ENCODE measurements at regions of chr5 and their contacts with region 1.

Region 1: GRCh38 chr5:119302916-119303897 is 52.6 kb upstream of the TNFAIP8 start:
- DNase-seq: peak; percentile 65 to 93
- ATAC-seq: peak; percentile 94 to 96
- H3K4me3 ChIP-seq: peak overlapping the region; percentile 14
- H3K27ac ChIP-seq: peak overlapping the region; percentile 82 to 89
- H3K4me1 ChIP-seq: peaks cover 78% of the 10 kb centered on the region
- CTCF ChIP-seq: no peak
- EP300 ChIP-seq: peak; percentile 79 to 90; a peak in 4 of 5 replicates
- POLR2A ChIP-seq: no peak
- RAD21 ChIP-seq: peak; percentile 40 to 50

Region 2: DNA sequence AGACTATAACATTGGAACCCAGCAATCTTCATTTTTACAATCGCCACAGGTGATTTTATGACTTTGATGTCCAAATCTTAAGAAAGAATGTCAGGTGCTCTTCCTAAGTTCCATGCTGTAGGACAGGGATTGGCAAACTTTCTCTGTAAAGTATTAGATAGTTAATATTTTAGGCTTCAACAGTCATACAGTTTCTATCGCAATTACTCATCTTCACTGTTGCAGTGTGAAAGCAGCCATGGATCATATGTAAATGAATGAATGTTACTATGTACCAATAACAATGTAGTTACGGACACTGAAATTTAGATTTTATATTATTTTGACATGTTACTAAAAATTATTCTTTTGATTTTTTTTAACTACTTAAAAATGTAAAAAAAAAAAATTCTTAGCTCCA is 484.6 kb before region 1 on chr5:
- CTCF ChIA-PET with region 1: no interaction called
- POLR2A ChIA-PET with region 1: no interaction called
- DNase-seq: no peak
- ATAC-seq: no peak
- H3K4me3 ChIP-seq: no peak overlapping the region
- H3K27ac ChIP-seq: no peak overlapping the region
- H3K4me1 ChIP-seq: no peaks in the 10 kb centered on the region
- CTCF ChIP-seq: no peak
- EP300 ChIP-seq: no peak
- POLR2A ChIP-seq: no peak
- RAD21 ChIP-seq: no peak

Region 3: GRCh38 chr5:119168401-119168800 is 134.8 kb before region 1 on chr5:
- CTCF ChIA-PET with region 1: no interaction called
- POLR2A ChIA-PET with region 1: no interaction called
- DNase-seq: no peak
- ATAC-seq: no peak
- H3K4me3 ChIP-seq: no peak overlapping the region
- H3K27ac ChIP-seq: no peak overlapping the region
- H3K4me1 ChIP-seq: no peaks in the 10 kb centered on the region
- CTCF ChIP-seq: no peak
- EP300 ChIP-seq: no peak
- POLR2A ChIP-seq: no peak
- RAD21 ChIP-seq: no peak

Region 4: GRCh38 chr5:119267958-119268386 is 35.2 kb before region 1 on chr5:
- CTCF ChIA-PET with region 1: interaction called, 4 read pairs
- POLR2A ChIA-PET with region 1: interaction called, 17 read pairs
- DNase-seq: peak; percentile 46 to 84
- ATAC-seq: peak; percentile 77 to 79
- H3K4me3 ChIP-seq: peak overlapping the region; percentile 69
- H3K27ac ChIP-seq: peak overlapping the region; percentile 86 to 93
- H3K4me1 ChIP-seq: peaks cover 34% of the 10 kb centered on the region
- CTCF ChIP-seq: no peak
- EP300 ChIP-seq: no peak
- POLR2A ChIP-seq: no peak
- RAD21 ChIP-seq: no peak

Region 5: GRCh38 chr5:119322948-119323537 is 19.8 kb after region 1 on chr5:
- CTCF ChIA-PET with region 1: interaction called, 4 read pairs
- POLR2A ChIA-PET with region 1: interaction called, 14 read pairs
- DNase-seq: peak in 1 of 2 experiments; percentile 45
- ATAC-seq: peak in 1 of 2 experiments; percentile 11; a peak in 2 of 6 replicates
- H3K4me3 ChIP-seq: no peak overlapping the region
- H3K27ac ChIP-seq: peak overlapping the region; percentile 86 to 93
- H3K4me1 ChIP-seq: peaks cover 60% of the 10 kb centered on the region
- CTCF ChIP-seq: no peak
- EP300 ChIP-seq: no peak
- POLR2A ChIP-seq: no peak
- RAD21 ChIP-seq: no peak

Region 6: DNA sequence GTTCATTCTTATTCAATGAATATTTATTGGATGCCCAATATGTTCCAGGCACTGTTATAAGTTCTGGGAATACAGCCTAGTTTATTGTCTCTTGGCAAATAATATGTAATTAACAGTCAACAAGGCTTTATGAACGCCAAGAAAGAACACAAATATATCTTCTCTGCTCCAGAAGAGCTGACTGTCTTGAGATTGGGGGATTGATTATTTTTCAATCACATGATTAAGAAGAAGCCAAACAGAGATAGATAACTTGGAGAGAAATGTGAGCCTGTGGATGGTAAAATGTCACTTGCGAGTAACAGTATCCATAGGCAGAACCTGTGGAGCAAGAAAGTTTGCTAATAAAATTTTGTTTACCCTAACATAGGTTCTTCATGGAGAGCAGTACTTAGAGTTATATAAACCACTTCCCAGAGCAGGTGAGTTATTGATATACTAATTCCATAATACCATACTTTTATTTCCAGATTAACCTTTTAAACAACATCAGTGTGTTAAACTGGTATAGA is 198.5 kb after region 1 on chr5:
- CTCF ChIA-PET with region 1: no interaction called
- POLR2A ChIA-PET with region 1: no interaction called
- DNase-seq: no peak
- ATAC-seq: no peak
- H3K4me3 ChIP-seq: no peak overlapping the region
- H3K27ac ChIP-seq: no peak overlapping the region
- H3K4me1 ChIP-seq: no peaks in the 10 kb centered on the region
- CTCF ChIP-seq: no peak
- EP300 ChIP-seq: no peak
- POLR2A ChIP-seq: no peak
- RAD21 ChIP-seq: no peak